A673 (cell line): ENCODE measurements at regions of chr2 and their contacts with region 1.

Region 1: DNA sequence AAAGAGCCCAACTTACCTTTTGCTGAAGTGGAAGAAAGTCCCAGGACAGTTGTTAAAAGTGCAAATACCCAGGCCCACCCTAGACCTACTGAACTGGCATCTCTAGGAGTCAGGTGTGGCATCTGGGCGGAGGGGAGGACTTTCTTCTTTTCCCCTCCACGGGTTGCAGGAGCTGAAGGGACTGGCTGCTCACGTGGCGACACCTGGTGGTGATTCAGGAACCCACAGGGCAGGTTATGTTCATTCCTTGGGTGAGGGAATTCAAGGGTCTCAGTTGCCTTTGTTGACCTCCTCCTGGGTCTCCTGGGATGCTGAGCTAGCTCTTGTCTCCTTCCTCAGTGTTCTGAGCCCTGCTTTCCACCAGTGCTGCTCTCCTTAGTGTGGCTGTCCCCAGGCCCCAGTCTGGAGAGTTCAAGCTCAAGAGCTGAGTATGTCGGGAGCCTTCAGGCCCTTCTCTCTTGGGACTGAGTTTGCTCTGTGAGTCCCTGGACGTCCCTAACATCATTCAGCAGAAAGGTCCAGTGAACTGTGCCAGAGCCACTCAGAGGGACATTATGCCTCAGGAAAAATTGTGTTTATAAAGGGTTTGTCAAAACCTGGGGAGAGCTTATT is 56.9 kb downstream of the DYSF start:
- DNase-seq: peak; percentile 63
- H3K4me3 ChIP-seq: no peak overlapping the region
- H3K27ac ChIP-seq: no peak overlapping the region
- H3K4me1 ChIP-seq: no peaks in the 10 kb centered on the region
- H3K27me3 ChIP-seq: peaks cover 7% of the 10 kb centered on the region
- CTCF ChIP-seq: peak; percentile 86

Region 2: GRCh38 chr2:71299507-71299906 is 210.8 kb before region 1 on chr2:
- CTCF ChIA-PET with region 1: interaction called, 67 read pairs
- POLR2A ChIA-PET with region 1: no interaction called
- intact Hi-C with region 1: loop called (anchors 1 kb)
- DNase-seq: peak; percentile 48
- H3K4me3 ChIP-seq: no peak overlapping the region
- H3K27ac ChIP-seq: no peak overlapping the region
- H3K4me1 ChIP-seq: no peaks in the 10 kb centered on the region
- H3K27me3 ChIP-seq: no peaks in the 10 kb centered on the region
- CTCF ChIP-seq: peak; percentile 73

Region 3: DNA sequence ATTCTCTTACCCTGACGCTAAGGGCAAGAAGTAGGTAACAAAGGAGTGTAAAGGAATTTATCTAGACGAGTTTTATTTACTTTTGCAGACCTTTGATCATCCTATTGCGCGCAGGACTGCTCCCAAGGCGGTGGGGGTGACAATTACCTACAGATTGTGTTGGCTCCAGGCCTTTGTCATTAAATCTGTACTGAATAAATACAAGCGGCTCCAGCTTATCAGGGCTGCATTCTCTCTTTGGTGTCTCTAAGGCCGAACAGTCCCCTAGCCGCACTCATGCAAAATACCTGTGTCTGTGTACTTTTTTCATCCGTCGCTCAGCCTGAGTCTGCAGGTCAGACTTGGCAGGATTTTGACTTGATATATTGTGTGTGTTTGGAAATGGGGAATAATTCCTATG is 114.8 kb before region 1 on chr2:
- CTCF ChIA-PET with region 1: no interaction called
- POLR2A ChIA-PET with region 1: no interaction called
- intact Hi-C with region 1: no loop called
- DNase-seq: no peak
- H3K4me3 ChIP-seq: no peak overlapping the region
- H3K27ac ChIP-seq: no peak overlapping the region
- H3K4me1 ChIP-seq: no peaks in the 10 kb centered on the region
- H3K27me3 ChIP-seq: no peaks in the 10 kb centered on the region
- CTCF ChIP-seq: no peak

Region 4: DNA sequence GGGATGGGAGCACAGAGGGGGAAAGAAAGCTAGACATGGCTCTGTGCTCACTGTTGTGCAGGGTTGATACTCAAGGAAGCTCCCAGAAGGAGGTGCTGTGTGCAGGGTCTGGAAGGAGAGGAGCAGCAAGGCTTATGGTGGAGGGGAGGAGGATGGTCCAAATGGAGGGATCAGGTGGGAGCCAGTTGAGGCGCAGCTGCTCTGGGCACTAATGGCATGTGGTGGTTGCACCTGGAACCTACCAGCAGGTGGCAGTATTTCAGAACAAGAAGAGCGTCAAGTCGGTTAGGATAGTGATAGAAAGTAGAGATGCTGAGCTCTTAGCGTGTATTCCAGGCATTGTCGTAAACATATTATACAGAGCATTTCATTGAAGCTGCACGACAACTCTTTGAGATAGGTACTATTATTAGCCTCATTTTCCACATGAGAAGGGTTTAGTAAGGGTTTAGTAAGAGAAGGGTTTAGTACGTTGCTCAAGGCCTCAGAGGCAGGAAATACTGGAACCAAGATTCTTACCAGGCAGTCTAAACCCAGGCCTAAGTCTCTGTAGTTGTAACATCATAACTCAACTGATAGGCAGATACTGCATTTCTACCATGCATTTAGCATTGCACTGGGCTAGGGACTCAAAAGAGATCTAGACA is 413.7 kb after region 1 on chr2:
- CTCF ChIA-PET with region 1: no interaction called
- POLR2A ChIA-PET with region 1: no interaction called
- intact Hi-C with region 1: no loop called
- DNase-seq: peak; percentile 82
- H3K4me3 ChIP-seq: no peak overlapping the region
- H3K27ac ChIP-seq: no peak overlapping the region
- H3K4me1 ChIP-seq: no peaks in the 10 kb centered on the region
- H3K27me3 ChIP-seq: no peaks in the 10 kb centered on the region
- CTCF ChIP-seq: peak; percentile 91